Activated CD4-positive, alpha-beta T cell treated with anti-CD3 and anti-CD28 coated beads, Interleukin-2, amount 10 ng/mL, durations not matched to agents 24 days and 14 days (primary cell): ENCODE measurements at regions of chr2 and their contacts with region 1.

Region 1: GRCh38 chr2:42360890-42361727 is at the start of gene COX7A2L:
- DNase-seq: peak; percentile 98
- H3K4me3 Mint-ChIP-seq: peak within 1 kb of the TSS; percentile 90
- H3K27ac Mint-ChIP-seq: peak within 1 kb of the TSS; percentile 99
- H3K4me1 Mint-ChIP-seq: peaks cover 44% of the 10 kb centered on the region
- H3K27me3 Mint-ChIP-seq: no peaks in the 10 kb centered on the region
- total RNA-seq, gene COX7A2L: 85.3 and 88.4 TPM in 2 replicates

Region 2: GRCh38 chr2:41840702-41841551 is 520.2 kb before region 1 on chr2:
- intact Hi-C with region 1: loop called (anchors 1 kb)
- DNase-seq: peak; percentile 99
- H3K4me3 Mint-ChIP-seq: peak overlapping the region; percentile 94
- H3K27ac Mint-ChIP-seq: peak overlapping the region; percentile 87
- H3K4me1 Mint-ChIP-seq: peaks cover 15% of the 10 kb centered on the region
- H3K27me3 Mint-ChIP-seq: peaks cover 20% of the 10 kb centered on the region

Region 3: DNA sequence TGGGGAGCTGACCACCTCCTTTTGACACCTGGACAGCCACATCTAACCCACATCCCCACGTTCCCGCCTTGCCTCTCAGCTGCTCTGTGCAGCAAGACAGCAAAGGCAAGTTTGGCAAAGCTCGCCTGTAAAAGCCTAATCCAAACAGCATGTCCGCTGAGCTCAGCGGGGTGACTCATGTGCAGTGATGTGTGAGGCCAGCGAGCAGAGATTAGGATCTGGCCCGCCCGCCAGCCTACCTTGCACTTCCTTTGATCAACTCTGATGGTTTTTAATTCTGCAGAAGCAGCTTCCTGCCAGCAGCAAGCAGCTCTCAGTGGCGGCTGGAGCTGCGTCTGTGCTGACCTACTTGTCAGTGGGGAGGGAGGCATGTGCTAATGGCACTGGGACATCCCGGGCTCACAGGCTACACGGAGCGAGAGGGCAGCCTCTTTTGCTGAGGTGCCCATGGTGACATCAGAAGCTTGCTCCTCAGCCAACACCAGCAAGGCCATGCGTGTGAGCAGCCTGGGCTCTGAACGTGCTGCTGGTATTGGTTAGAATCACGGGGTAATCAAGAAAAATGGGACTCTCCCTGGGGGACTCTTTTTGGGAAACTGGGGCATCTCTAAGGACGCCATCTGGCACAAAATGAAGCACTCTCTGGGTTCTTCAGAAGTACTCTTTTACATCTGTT is 228.0 kb before region 1 on chr2:
- intact Hi-C with region 1: loop called (anchors 1 kb)
- DNase-seq: peak; percentile 96
- H3K4me3 Mint-ChIP-seq: peak overlapping the region; percentile 78
- H3K27ac Mint-ChIP-seq: peak overlapping the region; percentile 91
- H3K4me1 Mint-ChIP-seq: peaks cover 76% of the 10 kb centered on the region
- H3K27me3 Mint-ChIP-seq: no peaks in the 10 kb centered on the region

Region 4: DNA sequence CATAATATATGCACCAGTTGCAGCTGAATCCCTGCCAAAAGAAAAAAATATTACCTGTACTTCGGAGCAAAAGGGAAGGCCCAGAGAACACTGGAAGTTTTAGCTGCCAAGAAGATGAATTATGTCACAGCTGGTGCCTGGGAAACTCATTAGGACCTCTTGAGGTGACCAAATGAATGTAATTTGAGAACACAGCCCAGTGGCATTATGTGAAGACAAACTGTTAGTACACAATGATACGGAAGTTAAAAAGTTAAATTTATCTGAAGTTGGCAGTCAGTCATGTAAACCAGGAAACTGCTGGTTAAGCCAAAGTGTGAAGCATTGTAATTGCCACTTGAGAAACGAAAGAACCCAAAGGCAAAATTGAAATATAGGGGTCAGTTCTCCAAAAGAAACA is 111.2 kb before region 1 on chr2:
- intact Hi-C with region 1: no loop called
- DNase-seq: no peak
- H3K4me3 Mint-ChIP-seq: no peak overlapping the region
- H3K27ac Mint-ChIP-seq: no peak overlapping the region
- H3K4me1 Mint-ChIP-seq: peaks cover 20% of the 10 kb centered on the region
- H3K27me3 Mint-ChIP-seq: no peaks in the 10 kb centered on the region

Region 5: GRCh38 chr2:42314892-42315467 is 46.1 kb before region 1 on chr2:
- intact Hi-C with region 1: no loop called
- DNase-seq: no peak
- H3K4me3 Mint-ChIP-seq: no peak overlapping the region
- H3K27ac Mint-ChIP-seq: peak overlapping the region; percentile 7
- H3K4me1 Mint-ChIP-seq: peaks cover 11% of the 10 kb centered on the region
- H3K27me3 Mint-ChIP-seq: no peaks in the 10 kb centered on the region

Region 6: DNA sequence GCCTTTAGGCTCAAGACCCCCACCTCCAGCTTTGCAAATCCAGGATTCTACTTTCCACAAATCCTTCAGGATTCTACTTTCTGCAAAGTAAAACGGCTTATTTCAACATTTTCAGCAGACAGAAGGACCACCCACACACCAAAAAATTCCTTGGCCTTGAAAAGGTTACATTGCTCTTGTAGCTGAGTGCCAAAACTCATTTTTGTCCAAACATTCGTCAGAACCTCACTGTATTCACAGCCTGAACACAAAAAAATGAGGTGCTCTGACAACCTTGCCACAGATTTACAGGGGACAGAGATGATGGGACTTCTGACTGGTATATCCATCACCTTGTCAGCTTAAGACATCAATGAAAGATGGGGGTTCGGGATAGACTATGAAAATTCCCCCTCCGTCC is 62.9 kb after region 1 on chr2:
- intact Hi-C with region 1: loop called (anchors 2 kb)
- DNase-seq: peak; percentile 12
- H3K4me3 Mint-ChIP-seq: no peak overlapping the region
- H3K27ac Mint-ChIP-seq: no peak overlapping the region
- H3K4me1 Mint-ChIP-seq: peaks cover 16% of the 10 kb centered on the region
- H3K27me3 Mint-ChIP-seq: peaks cover 14% of the 10 kb centered on the region

Region 7: GRCh38 chr2:42457011-42457410 is 95.9 kb after region 1 on chr2:
- intact Hi-C with region 1: no loop called
- DNase-seq: no peak
- H3K4me3 Mint-ChIP-seq: no peak overlapping the region
- H3K27ac Mint-ChIP-seq: no peak overlapping the region
- H3K4me1 Mint-ChIP-seq: no peaks in the 10 kb centered on the region
- H3K27me3 Mint-ChIP-seq: peaks cover 2% of the 10 kb centered on the region

Region 8: DNA sequence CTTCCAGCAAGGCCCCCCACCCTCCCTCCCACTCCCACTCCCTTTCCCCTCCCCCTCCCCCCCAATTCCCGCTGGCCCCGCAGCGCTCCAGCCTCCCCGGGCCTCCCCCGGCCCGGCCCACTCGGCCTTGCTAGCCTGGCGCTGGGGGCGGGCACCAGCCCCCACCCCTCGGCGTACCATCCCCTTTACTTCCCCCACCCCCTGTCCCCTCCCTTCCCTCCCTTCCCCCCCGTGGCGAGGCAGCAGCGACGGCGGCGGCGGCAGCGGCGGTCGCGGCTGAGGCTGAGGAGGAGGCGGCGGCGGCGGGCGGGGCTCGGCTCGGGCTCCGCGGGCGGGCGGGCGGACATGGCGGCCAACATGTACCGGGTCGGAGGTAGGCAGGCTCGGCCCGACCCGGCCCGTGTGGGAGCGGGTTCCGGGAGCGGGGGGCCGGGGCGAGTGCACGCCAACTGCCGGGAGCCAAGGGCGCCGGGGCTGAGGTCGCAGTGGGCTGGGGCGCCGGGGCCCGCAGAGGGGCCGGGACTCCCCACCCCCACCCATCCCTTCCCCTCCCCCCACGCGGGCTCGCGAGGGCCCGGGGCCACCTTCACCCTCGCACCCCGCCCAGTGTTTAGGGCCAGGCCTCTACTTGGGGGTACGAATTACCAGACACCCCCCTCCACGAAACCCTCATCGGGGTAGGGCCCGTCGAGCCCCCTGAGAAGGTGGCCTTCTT is 207.4 kb after region 1 on chr2 and contains the start of gene MTA3:
- intact Hi-C with region 1: loop called (anchors 1 kb)
- DNase-seq: peak; percentile 91
- H3K4me3 Mint-ChIP-seq: peak within 1 kb of the TSS; percentile 91
- H3K27ac Mint-ChIP-seq: peak within 1 kb of the TSS; percentile 94
- H3K4me1 Mint-ChIP-seq: peaks cover 23% of the 10 kb centered on the region
- H3K27me3 Mint-ChIP-seq: no peaks in the 10 kb centered on the region
- total RNA-seq, gene MTA3: 31.7 and 36.6 TPM in 2 replicates

Region 9: GRCh38 chr2:42810121-42810970 is 449.2 kb after region 1 on chr2:
- intact Hi-C with region 1: loop called (anchors 2 kb)
- DNase-seq: peak; percentile 99
- H3K4me3 Mint-ChIP-seq: peak overlapping the region; percentile 97
- H3K27ac Mint-ChIP-seq: peak overlapping the region; percentile 100
- H3K4me1 Mint-ChIP-seq: peaks cover 20% of the 10 kb centered on the region
- H3K27me3 Mint-ChIP-seq: peaks cover 15% of the 10 kb centered on the region

Region 10: DNA sequence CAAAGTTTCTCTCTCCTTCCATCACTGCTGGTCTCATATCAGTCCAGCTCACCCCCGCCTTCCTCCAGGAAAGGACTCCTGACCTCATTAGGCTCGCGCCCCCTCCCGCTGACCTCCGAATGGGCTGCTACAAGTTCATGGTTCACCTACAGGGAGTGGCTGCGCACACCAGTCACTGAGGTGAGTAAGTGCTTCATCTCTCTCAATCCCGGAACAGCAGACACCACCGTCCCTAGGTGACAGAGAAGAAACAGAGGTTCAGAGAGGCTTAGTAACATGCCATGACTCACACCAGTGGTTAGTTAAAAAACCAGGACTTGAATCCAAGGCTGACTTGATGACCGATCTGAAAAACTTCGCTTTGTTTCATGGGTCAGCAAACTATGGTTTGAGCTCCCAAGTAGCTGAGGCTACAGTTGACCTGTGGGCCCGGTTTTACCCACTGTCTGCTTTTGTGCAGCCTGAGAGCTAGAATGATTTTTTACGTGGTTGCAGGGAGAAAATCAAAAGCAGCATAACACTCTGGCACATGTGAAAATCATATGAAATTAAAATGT is 823.3 kb after region 1 on chr2:
- intact Hi-C with region 1: no loop called
- DNase-seq: peak; percentile 86
- H3K4me3 Mint-ChIP-seq: peak overlapping the region; percentile 14
- H3K27ac Mint-ChIP-seq: peak overlapping the region; percentile 85
- H3K4me1 Mint-ChIP-seq: peaks cover 40% of the 10 kb centered on the region
- H3K27me3 Mint-ChIP-seq: no peaks in the 10 kb centered on the region